ENCODE measurements at regions of chr2 and their contacts with region 1.

Region 1: DNA sequence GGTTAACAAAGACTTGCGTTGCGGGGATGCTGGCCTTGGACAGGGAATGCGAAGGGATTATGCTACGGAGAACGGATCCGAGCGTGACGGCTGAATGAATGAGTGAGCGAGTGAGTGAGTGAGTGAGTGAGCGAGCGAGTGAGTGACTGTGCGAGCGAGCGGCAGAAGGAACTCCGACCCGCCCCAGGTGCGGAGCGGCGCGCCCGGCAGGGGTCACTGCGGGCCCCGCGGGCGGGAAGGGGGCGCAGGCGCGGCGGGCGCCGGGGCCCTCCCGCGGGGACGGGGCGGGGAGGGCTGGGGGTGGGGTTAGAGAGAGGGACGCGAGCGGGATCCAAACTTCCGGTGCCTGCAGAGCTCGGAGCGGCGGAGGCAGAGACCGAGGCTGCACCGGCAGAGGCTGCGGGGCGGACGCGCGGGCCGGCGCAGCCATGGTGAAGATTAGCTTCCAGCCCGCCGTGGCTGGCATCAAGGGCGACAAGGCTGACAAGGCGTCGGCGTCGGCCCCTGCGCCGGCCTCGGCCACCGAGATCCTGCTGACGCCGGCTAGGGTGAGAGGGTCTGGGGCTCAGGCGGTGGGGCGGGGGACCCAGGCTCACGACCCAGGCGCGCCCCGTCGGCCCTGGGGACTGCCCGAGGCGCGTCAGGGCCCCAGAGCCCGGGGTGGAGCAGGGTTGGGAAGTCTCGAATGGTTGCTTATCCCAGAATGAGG is at the start of gene ITM2C:
- DNase-seq: peak; percentile 59
- ATAC-seq: peak; percentile 86
- H3K4me3 ChIP-seq: peak within 1 kb of the TSS; percentile 91 to 99 (median 97)
- H3K27ac ChIP-seq: peak within 1 kb of the TSS; percentile 31
- H3K4me1 ChIP-seq: peaks cover 33% of the 10 kb centered on the region
- H3K27me3 ChIP-seq: peaks cover 0 to 16% of the 10 kb centered on the region in 2 experiments; a peak in 2 of 5 replicates
- CTCF ChIP-seq: peak; percentile 73
- EP300 ChIP-seq: no peak
- POLR2A ChIP-seq: peak; percentile 66 to 93
- RAD21 ChIP-seq: no peak
- total RNA-seq, gene ITM2C: 40.7 and 70.5 TPM in 2 replicates

Region 2: GRCh38 chr2:230924470-230925341 is 60.0 kb after region 1 on chr2 and contains the start of gene GPR55:
- CTCF ChIA-PET with region 1: no interaction called
- POLR2A ChIA-PET with region 1: no interaction called
- in situ Hi-C with region 1: no loop called
- intact Hi-C with region 1: loop called (anchors 2 kb)
- DNase-seq: no peak
- ATAC-seq: peak; percentile 20
- H3K4me3 ChIP-seq: no peak within 1 kb of the TSS
- H3K27ac ChIP-seq: no peak within 1 kb of the TSS
- H3K4me1 ChIP-seq: no peaks in the 10 kb centered on the region
- H3K27me3 ChIP-seq: peaks cover 2 to 60% of the 10 kb centered on the region in 2 experiments; a peak in 4 of 5 replicates
- CTCF ChIP-seq: peak; percentile 30
- EP300 ChIP-seq: no peak
- POLR2A ChIP-seq: no peak
- RAD21 ChIP-seq: no peak
- total RNA-seq, gene GPR55: not detected in 2 replicates